ENCODE measurements at regions of chr9 and their contacts with region 1.

Region 1: DNA sequence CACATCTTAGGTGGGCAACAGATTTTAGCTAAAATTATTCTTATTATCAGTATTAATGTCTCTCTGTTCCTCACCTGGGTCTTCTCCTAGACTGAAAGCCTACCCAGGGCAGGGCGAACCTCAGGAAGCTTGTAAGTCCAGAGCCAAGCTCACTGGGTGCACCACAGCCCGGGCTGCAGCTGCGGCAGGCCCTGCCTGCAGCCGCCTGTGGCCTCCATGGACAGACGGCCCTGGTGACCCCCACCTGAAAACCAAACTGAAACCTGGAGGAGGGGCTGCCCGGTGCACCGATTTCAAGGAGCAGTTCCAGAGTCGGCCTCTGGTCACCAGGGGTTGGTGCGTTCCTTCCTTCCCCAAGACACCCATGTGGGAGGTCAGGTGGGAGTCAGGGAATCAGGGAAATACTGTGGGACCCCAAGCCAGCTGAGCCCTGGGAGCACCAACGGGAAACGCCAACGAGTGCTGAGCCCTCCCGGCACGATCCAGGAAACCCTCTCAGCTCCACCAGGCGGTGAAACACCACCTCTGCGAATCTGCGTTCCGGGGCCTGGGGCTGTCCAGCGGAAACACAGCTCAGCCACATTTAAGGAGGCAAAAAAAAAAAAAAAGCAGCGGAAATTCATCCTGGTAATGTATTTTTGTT is 68.6 kb upstream of the PPP1R26 start:
- DNase-seq: no peak
- H3K4me3 ChIP-seq: no peak overlapping the region
- H3K27ac ChIP-seq: no peak overlapping the region
- H3K4me1 ChIP-seq: no peaks in the 10 kb centered on the region
- H3K27me3 ChIP-seq: no peaks in the 10 kb centered on the region
- CTCF ChIP-seq: no peak
- EP300 ChIP-seq: no peak
- POLR2A ChIP-seq: no peak

Region 2: DNA sequence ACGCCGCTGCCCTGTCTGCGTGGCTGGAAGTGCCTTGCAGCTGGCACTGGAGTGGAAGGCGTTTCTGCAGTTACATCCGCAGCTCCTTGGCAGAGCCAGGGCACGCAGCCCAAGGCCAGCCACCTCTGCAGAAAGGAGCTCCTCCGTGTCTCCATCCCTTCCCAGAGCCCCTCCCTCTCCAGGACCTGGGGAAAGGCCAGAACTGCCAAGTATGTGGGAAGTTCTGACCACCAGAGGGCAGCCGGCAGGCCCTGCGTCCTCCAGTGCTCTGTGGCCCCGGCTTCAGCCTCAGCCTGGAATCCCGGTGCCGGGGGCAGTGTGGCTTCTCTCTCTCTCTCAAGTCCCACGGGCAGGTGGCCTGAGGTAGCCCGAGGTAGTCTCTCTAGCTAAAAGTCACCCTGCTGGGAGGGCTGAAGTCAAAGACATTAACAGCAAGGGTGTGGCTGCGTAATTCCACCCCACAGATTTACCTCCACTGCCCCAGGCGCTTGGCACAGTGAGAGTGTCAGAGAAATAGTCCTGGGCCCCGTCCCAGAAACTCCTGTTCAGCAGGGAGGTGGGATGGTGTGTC is 632.0 kb before region 1 on chr9:
- intact Hi-C with region 1: loop called in 1 of 4 experiments (anchors 10 kb)
- DNase-seq: peak; percentile 64 to 76 (median 70)
- H3K4me3 ChIP-seq: no peak overlapping the region
- H3K27ac ChIP-seq: no peak overlapping the region
- H3K4me1 ChIP-seq: no peaks in the 10 kb centered on the region
- H3K27me3 ChIP-seq: no peaks in the 10 kb centered on the region
- CTCF ChIP-seq: peak in 2 of 3 donors; percentile 39 to 47
- EP300 ChIP-seq: no peak
- POLR2A ChIP-seq: no peak

Region 3: GRCh38 chr9:135592625-135593024 is 181.7 kb after region 1 on chr9:
- intact Hi-C with region 1: no loop called
- DNase-seq: no peak
- H3K4me3 ChIP-seq: no peak overlapping the region
- H3K27ac ChIP-seq: no peak overlapping the region
- H3K4me1 ChIP-seq: no peaks in the 10 kb centered on the region
- H3K27me3 ChIP-seq: no peaks in the 10 kb centered on the region
- CTCF ChIP-seq: no peak
- EP300 ChIP-seq: no peak
- POLR2A ChIP-seq: no peak

Measured in ovary (tissue), 10 donors.